Activated CD4-positive, alpha-beta T cell treated with anti-CD3 and anti-CD28 coated beads, Interleukin-2, amount 10 ng/mL, durations not matched to agents 24 days and 14 days (primary cell): ENCODE measurements at regions of chr1 and their contacts with region 1.

Region 1: DNA sequence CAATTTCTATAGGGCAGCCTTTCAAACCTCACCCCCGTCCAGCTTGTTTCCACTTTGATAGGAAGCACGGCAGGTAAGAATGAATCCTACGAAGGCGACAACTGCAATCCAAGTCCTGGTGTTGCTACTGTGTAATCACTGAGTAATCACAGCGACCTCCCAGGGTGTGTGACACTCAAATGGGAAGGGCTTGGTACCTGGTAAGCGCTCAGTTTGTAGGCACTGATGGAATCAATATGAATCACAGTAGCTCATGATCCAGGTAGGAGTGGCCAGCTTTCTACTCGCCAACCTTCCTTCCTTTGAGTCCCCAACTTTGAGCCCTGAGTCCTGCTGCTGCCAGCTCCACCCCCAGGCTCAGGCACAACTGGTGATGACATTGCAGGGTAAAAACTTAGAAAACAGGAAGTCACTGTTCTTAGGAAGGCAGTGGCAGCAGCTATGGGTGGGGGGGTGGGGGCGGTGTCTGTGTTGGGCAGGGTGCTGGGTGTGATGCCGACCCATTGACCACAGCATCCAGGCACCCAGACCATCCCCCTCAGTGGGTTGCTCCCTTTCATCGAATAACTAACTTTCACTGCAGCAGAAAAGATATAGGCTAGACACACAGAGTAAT is 70.7 kb downstream of the CD247 start:
- DNase-seq: peak; percentile 92
- H3K4me3 Mint-ChIP-seq: peak overlapping the region; percentile 79
- H3K27ac Mint-ChIP-seq: peak overlapping the region; percentile 93
- H3K4me1 Mint-ChIP-seq: peaks cover 66% of the 10 kb centered on the region
- H3K27me3 Mint-ChIP-seq: no peaks in the 10 kb centered on the region

Region 2: DNA sequence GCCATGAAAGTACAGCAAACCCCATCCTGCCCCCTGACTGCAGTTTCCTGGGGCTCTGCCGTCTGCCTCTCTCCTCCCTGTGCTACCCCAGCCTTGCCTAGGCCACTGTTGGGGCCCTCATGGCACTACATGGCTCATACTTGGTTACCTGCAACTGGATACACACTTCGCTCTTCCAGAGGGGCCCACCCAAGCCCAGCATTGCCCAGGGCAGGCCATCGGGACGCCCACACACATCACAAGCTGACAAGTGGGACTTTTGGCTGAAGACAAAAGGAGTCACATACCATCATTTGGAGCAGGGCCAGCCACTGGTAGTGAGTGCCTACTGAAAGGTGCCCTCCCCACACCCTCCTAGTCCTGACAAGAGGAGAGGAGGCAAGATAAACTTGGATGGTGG is 12.1 kb before region 1 on chr1:
- intact Hi-C with region 1: no loop called
- DNase-seq: peak; percentile 55
- H3K4me3 Mint-ChIP-seq: no peak overlapping the region
- H3K27ac Mint-ChIP-seq: peak overlapping the region; percentile 78
- H3K4me1 Mint-ChIP-seq: peaks cover 38% of the 10 kb centered on the region
- H3K27me3 Mint-ChIP-seq: no peaks in the 10 kb centered on the region

Region 3: GRCh38 chr1:167499664-167500101 is 52.1 kb after region 1 on chr1:
- intact Hi-C with region 1: loop called (anchors 1 kb)
- DNase-seq: peak; percentile 77
- H3K4me3 Mint-ChIP-seq: peak overlapping the region; percentile 76
- H3K27ac Mint-ChIP-seq: peak overlapping the region; percentile 95
- H3K4me1 Mint-ChIP-seq: peaks cover 93% of the 10 kb centered on the region
- H3K27me3 Mint-ChIP-seq: no peaks in the 10 kb centered on the region

Region 4: DNA sequence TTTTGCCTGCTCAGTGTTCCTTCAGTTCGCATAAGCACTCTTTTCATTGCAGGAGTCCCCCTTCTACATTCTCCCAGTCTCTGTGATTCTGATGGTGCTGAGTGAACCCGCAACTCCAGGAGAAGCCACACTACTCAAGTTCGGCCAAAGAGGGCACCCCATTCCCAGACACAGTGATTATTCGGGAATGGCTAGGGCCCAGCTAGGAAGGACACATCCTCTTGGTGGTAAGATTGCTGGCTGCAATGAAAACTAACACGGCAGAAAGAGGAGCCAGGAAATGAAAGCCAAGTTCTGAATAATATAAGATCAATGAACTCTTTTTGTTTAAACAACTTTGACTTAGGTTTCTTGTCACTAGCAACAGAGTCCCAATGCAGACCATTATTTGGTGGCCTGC is 91.0 kb after region 1 on chr1:
- intact Hi-C with region 1: no loop called
- DNase-seq: no peak
- H3K4me3 Mint-ChIP-seq: peak overlapping the region; percentile 30
- H3K27ac Mint-ChIP-seq: no peak overlapping the region
- H3K4me1 Mint-ChIP-seq: peaks cover 36% of the 10 kb centered on the region
- H3K27me3 Mint-ChIP-seq: no peaks in the 10 kb centered on the region